ENCODE measurements at regions of chr3 and their contacts with region 1.

Region 1: GRCh38 chr3:126389112-126389793 is 5.5 kb upstream of the CFAP100 start:
- DNase-seq: peak; percentile 46
- ATAC-seq: peak; percentile 99
- H3K4me3 ChIP-seq: peak overlapping the region; percentile 46 to 57
- H3K27ac ChIP-seq: peak overlapping the region; percentile 62
- H3K4me1 ChIP-seq: no peaks in the 10 kb centered on the region
- H3K27me3 ChIP-seq: peaks cover 8% of the 10 kb centered on the region
- CTCF ChIP-seq: peak; percentile 100

Region 2: DNA sequence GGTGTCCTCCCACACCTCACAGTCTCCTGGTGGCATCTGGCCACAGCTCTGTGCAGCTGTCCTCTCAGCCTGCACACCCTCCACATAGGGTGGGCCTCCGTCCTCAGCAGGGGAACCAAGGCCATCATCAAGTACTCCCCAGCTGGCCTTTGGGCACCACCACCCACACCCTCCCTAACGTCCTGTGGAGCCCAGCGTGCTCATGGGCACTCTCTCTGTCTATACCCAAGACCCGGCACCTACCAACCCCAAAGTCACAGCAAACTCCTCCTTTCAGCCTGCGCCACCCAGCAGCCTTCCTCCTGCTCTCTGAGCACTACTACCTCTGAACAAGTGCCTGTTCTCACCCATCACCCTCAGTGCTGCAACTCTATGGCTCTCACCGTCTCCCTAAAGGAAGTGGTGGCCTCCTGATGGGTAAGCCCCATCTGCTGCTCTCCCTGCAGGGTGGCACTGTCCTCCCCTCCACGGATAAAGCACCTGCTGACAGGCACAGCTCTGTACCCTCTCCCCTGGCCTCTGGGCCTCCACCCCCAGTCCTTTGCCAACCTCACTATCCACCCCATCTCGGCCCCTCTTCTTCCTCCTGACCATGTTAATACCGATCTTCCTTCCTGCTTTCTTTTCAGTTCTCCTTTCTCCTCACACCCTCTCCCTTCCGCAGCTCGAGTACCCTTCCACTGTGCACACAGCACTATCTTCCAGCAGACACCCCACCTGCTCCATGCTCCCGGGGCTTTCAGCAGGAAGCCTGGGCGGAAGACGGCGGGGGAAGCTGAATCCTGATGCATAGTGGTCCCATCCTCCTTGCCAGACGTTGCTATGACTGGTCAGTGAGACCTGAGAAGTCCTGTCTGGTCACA is 336.8 kb before region 1 on chr3:
- CTCF ChIA-PET with region 1: interaction called, 10 read pairs
- POLR2A ChIA-PET with region 1: no interaction called
- in situ Hi-C with region 1: no loop called
- intact Hi-C with region 1: no loop called
- DNase-seq: no peak
- ATAC-seq: no peak
- H3K4me3 ChIP-seq: no peak overlapping the region
- H3K27ac ChIP-seq: no peak overlapping the region
- H3K4me1 ChIP-seq: no peaks in the 10 kb centered on the region
- H3K27me3 ChIP-seq: no peaks in the 10 kb centered on the region
- CTCF ChIP-seq: no peak

Region 3: GRCh38 chr3:126124148-126124868 is 264.9 kb before region 1 on chr3:
- CTCF ChIA-PET with region 1: interaction called, 10 read pairs
- POLR2A ChIA-PET with region 1: no interaction called
- in situ Hi-C with region 1: no loop called
- intact Hi-C with region 1: no loop called
- DNase-seq: no peak
- ATAC-seq: no peak
- H3K4me3 ChIP-seq: no peak overlapping the region
- H3K27ac ChIP-seq: no peak overlapping the region
- H3K4me1 ChIP-seq: no peaks in the 10 kb centered on the region
- H3K27me3 ChIP-seq: peaks cover 13% of the 10 kb centered on the region; the same call in 1 of the 2 replicates
- CTCF ChIP-seq: no peak

Region 4: GRCh38 chr3:126134219-126134975 is 254.9 kb before region 1 on chr3:
- CTCF ChIA-PET with region 1: interaction called, 22 read pairs
- POLR2A ChIA-PET with region 1: no interaction called
- in situ Hi-C with region 1: no loop called
- intact Hi-C with region 1: loop called (anchors 2 kb)
- DNase-seq: peak; percentile 17
- ATAC-seq: peak; percentile 86
- H3K4me3 ChIP-seq: no peak overlapping the region
- H3K27ac ChIP-seq: no peak overlapping the region
- H3K4me1 ChIP-seq: no peaks in the 10 kb centered on the region; the same call in 1 of the 2 replicates
- H3K27me3 ChIP-seq: peaks cover 4% of the 10 kb centered on the region
- CTCF ChIP-seq: peak; percentile 91

Region 5: DNA sequence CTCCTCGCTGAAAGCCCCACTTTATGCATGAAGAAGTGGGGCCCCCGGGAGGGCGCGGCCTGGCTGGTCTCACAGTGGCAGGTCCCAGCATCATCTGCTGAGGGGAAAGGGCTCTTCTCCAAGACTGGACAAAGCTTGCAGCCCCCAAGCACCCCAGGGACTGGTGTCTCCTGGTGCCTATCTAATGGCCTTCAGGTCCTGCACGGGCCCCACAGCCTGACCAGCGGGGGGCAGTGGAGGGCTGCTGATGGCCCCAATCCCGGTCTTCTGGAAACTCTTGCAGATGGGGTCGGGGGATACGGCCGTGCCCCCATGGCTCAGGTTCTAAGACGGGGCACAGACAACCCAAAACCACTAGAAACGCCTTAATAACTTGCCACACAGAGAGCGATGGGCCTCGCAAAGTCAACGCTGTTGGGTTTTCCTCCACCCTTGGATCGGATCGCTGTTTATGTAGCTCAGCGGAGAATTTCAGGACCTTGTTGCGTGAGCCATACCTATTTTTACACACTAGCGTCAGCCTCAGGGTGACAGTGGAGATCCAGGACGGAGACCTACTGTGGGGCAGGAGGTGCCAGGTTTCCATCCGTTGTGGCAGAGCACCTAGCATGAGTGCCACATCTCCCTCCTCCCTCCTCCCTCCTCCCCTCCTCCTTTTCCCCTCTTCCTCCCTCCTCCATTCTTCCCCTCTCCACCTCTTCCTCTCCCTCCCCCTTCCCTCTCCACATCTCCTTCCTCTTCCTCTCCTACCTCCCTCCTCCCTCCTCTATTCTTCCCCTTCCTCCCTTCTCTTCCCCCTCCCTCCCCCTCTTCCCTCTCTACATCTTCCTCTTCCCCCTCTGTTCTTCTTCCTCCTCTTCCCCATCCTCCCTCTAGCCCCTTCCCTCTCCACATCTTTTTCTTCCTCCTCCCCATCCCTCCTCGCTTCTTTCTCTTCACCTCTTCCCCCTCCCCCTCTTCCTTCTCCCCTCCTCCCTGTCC is 129.6 kb before region 1 on chr3:
- CTCF ChIA-PET with region 1: interaction called, 4 read pairs
- POLR2A ChIA-PET with region 1: no interaction called
- in situ Hi-C with region 1: no loop called
- intact Hi-C with region 1: loop called (anchors 1 kb)
- DNase-seq: peak; percentile 13
- ATAC-seq: peak; percentile 88
- H3K4me3 ChIP-seq: peak overlapping the region; percentile 12; a peak in 2 of 4 replicates
- H3K27ac ChIP-seq: no peak overlapping the region
- H3K4me1 ChIP-seq: no peaks in the 10 kb centered on the region
- H3K27me3 ChIP-seq: no peaks in the 10 kb centered on the region; the same call in 1 of the 2 replicates
- CTCF ChIP-seq: peak; percentile 88

Region 6: GRCh38 chr3:126399771-126400170 is 10.5 kb after region 1 on chr3:
- CTCF ChIA-PET with region 1: interaction called, 16 read pairs
- POLR2A ChIA-PET with region 1: no interaction called
- in situ Hi-C with region 1: no loop called
- intact Hi-C with region 1: no loop called
- DNase-seq: no peak
- ATAC-seq: no peak
- H3K4me3 ChIP-seq: no peak overlapping the region
- H3K27ac ChIP-seq: no peak overlapping the region
- H3K4me1 ChIP-seq: no peaks in the 10 kb centered on the region
- H3K27me3 ChIP-seq: no peaks in the 10 kb centered on the region; the same call in 1 of the 2 replicates
- CTCF ChIP-seq: no peak

Measured in Panc1 (cell line).